ENCODE measurements at regions of chr11 and their contacts with region 1.

Region 1: GRCh38 chr11:22304337-22304961 is 33.7 kb upstream of the SLC17A6 start:
- DNase-seq: no peak
- ATAC-seq: no peak

Region 2: DNA sequence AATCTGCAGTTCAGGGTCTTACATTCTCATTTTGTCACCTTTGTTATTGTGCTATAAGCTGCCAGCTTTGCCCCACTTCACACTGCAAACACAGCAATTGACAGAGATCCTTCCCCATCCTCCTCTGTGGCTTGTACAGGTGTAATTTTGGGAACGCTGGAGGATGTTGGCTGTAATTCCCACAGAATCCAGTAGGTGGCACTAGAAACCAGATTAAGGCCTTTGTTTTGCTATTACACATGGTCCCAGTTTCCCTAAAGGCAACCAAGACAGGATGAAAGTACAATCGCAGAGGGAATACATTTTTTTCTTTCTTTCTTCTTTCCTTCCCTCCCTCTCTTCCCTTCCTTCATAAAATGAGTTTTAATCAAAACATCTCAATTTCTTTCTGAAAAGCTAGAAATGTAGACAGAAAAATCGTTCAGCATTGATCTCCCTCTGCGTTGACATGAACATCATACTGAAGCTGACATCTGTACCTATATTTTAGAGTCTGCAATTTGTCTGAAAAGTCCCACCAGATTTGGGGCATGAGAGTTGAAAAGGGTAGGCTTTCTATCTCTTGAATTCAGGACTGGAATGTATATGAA is 1656.4 kb before region 1 on chr11:
- intact Hi-C with region 1: loop called (anchors 10 kb)
- DNase-seq: no peak
- ATAC-seq: peak; percentile 42

Region 3: GRCh38 chr11:22459048-22459447 is 154.6 kb after region 1 on chr11:
- intact Hi-C with region 1: no loop called
- DNase-seq: no peak
- ATAC-seq: no peak

Measured in sciatic nerve (tissue), 2 donors.